Activated CD8-positive, alpha-beta T cell treated with anti-CD3 and anti-CD28 coated beads for 36 hours (primary cell): ENCODE measurements at regions of chr19 and their contacts with region 1.

Region 1: DNA sequence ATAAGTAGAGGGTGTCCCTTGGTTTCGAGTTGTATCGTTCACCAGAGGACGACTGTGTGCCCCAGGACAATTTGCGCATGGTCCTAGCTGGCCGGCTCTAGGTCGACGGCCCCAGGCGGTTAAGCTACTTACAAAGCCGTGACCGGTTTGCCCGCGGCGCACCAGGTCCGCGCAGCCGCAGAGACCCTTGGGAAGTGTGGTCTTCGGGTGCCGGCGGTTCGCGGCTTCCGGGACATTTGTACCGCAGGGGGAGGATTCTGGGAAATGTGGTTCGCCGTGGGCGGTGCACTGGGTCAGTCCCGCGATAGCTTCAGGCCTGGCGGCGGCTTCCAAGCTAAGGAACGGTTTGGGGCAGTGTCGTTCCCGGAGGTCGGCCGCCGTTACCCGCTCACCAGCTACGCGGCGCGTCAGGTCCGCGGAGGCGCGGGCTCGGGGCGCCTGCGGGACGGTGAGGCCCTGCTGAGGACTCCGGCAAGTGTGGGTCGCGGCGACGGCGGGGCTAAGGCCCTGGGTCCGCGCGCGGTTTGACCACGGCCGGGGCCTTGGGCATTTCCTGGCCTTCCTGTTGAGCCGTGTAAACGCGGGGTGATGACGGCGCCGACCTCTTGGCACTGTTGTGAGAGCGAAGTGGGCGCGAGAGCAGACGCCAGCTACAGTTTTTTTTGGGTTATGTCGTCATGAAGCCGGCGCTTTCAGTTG is at the start of gene ZNF302:
- DNase-seq: peak; percentile 97
- ATAC-seq: peak; percentile 80
- H3K4me3 Mint-ChIP-seq: peak within 1 kb of the TSS; percentile 95
- H3K27ac Mint-ChIP-seq: peak within 1 kb of the TSS; percentile 99
- H3K4me1 Mint-ChIP-seq: peaks cover 34% of the 10 kb centered on the region
- H3K27me3 Mint-ChIP-seq: peaks cover 1% of the 10 kb centered on the region
- CTCF ChIP-seq: no peak
- total RNA-seq, gene ZNF302: 14.9 to 15.9 TPM

Region 2: DNA sequence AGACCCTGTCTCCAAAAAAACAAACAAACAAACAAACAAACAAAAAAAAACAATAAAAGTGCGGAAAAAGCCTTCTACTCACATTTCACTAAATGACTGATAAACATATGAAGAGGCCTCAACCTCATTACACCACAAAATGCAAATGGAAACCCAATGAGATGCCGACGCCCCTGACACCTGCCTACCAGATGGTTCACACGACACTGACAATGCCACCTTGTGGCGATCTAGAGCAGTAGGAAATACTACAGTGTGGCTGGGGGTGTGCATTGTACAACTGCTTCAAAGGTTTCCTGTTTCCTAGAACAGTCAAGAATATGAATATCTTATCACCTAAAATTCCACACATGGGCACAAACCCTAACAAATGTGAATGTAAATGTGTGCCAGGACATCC is 14.6 kb before region 1 on chr19:
- CTCF ChIA-PET with region 1: interaction called, 7 read pairs
- POLR2A ChIA-PET with region 1: interaction called, 11 read pairs
- intact Hi-C with region 1: no loop called
- DNase-seq: peak; percentile 71
- ATAC-seq: peak; percentile 97
- H3K4me3 Mint-ChIP-seq: no peak overlapping the region
- H3K27ac Mint-ChIP-seq: peak overlapping the region; percentile 59
- H3K4me1 Mint-ChIP-seq: peaks cover 21% of the 10 kb centered on the region
- H3K27me3 Mint-ChIP-seq: peaks cover under 1% of the 10 kb centered on the region
- CTCF ChIP-seq: peak; percentile 68

Region 3: GRCh38 chr19:34692549-34692948 is 15.0 kb after region 1 on chr19:
- CTCF ChIA-PET with region 1: no interaction called
- POLR2A ChIA-PET with region 1: no interaction called
- intact Hi-C with region 1: no loop called
- DNase-seq: no peak
- ATAC-seq: no peak
- H3K4me3 Mint-ChIP-seq: no peak overlapping the region
- H3K27ac Mint-ChIP-seq: no peak overlapping the region
- H3K4me1 Mint-ChIP-seq: no peaks in the 10 kb centered on the region
- H3K27me3 Mint-ChIP-seq: peaks cover 16% of the 10 kb centered on the region
- CTCF ChIP-seq: no peak

Region 4: DNA sequence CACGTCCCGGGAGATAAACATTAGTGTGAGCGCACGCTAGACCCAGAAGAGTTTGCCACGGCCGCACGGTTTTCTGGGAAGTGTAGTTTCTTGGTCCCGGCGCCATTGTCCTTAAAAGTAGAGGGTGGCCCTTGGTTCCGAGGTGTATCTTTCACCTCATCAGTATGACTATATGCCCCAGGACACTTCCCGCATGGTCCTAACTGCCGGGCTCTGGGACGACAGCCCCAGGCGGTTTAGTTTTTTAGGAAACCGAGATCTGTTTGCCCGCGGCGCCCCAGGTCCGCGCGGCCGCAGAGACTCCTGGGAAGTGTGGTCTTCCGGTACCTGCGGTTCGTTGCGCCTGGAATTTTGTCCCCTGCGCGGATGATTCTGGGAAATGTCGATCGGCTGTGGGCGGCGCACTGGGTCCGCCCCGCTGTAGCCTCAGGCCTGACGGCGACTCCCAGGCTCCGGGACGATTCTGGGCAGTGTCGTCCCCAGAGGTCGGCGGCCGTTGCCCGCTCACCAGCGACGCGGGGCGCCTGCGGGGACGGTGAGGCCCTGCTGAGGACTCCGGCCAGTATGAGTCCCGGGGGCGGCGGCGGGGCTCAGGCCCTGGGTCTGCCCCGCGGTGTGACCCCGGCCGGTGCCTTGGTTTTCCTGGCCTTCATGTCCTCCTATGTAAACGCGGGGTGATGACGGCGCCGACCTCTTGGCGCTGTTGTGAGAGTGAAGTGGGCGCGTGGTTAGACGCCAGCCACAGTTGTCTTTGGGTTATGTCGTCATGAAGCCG is 56.5 kb after region 1 on chr19 and contains the start of gene ZNF181:
- CTCF ChIA-PET with region 1: no interaction called
- POLR2A ChIA-PET with region 1: interaction called, 11 read pairs
- intact Hi-C with region 1: no loop called
- DNase-seq: peak; percentile 93
- ATAC-seq: peak; percentile 91
- H3K4me3 Mint-ChIP-seq: peak within 1 kb of the TSS; percentile 80
- H3K27ac Mint-ChIP-seq: peak within 1 kb of the TSS; percentile 92
- H3K4me1 Mint-ChIP-seq: peaks cover 26% of the 10 kb centered on the region
- H3K27me3 Mint-ChIP-seq: no peaks in the 10 kb centered on the region
- CTCF ChIP-seq: no peak
- total RNA-seq, gene ZNF181: 2.8 to 5.1 TPM